ENCODE measurements at regions of chr11 and their contacts with region 1.

Region 1: GRCh38 chr11:105081412-105082087 is 36.4 kb upstream of the CARD16 start:
- DNase-seq: no peak
- H3K4me3 Mint-ChIP-seq: no peak overlapping the region
- H3K27ac Mint-ChIP-seq: no peak overlapping the region
- H3K4me1 Mint-ChIP-seq: peaks cover 23% of the 10 kb centered on the region
- H3K27me3 Mint-ChIP-seq: no peaks in the 10 kb centered on the region
- CTCF ChIP-seq: no peak

Region 2: DNA sequence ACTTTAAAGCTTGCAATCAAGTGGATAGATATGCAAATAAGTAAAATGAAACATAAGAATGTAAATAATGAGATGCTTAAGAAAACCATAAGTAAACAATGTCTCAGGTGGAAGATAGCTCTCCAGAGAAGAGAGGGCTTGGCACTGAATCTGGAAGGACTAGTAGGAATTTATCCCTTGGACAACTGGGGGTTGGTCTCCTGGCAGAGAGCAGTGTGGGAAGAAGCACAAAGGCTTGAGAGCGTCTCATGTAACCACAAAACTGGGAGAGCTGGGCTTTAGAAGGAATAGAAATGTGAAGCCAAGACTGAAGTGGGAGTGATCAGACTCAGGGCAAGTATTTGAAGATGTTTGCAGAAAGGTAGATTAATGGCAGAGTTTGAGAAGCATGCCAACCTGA is 26.7 kb after region 1 on chr11:
- CTCF ChIA-PET with region 1: no interaction called
- POLR2A ChIA-PET with region 1: no interaction called
- intact Hi-C with region 1: loop called (anchors 1 kb)
- DNase-seq: no peak
- H3K4me3 Mint-ChIP-seq: no peak overlapping the region
- H3K27ac Mint-ChIP-seq: peak overlapping the region; percentile 44
- H3K4me1 Mint-ChIP-seq: peaks cover 17% of the 10 kb centered on the region
- H3K27me3 Mint-ChIP-seq: no peaks in the 10 kb centered on the region
- CTCF ChIP-seq: no peak

Measured in MCF 10A (cell line).